PC-3 (cell line): ENCODE measurements at regions of chr20 and their contacts with region 1.

Region 1: DNA sequence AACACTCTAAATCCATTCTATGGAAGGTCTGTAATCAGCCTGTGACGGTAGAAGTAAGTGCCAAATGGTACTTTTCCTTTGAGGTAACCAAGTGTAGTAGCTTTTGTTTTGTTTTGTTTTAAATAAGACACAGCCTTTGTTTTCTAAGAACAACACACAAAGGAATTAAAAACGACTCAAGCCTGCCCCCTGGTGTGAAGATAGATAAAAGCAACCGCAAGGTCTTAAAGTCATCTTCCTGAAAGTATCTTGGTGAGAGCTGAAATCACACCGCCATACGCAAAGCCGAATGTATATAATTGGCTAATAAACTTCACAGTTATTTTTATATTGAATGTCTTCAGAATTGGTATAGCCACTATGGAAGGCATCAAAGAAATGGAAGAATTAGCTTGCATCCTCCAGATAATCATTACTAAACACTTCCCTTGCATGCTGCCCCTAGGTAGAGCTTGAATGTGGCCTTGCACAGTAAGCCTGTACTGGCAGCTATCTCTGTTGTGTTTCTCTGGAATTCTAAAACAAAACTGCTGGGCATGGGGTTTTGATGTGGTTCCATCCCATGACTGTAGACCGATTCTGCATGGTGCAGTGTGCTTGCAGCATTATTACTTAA is 95.6 kb downstream of the LAMP5 start:
- DNase-seq: peak; percentile 94
- ATAC-seq: peak; percentile 78
- H3K4me3 ChIP-seq: no peak overlapping the region
- H3K27ac ChIP-seq: no peak overlapping the region
- H3K4me1 ChIP-seq: peaks cover 7% of the 10 kb centered on the region
- H3K27me3 ChIP-seq: no peaks in the 10 kb centered on the region
- CTCF ChIP-seq: peak; percentile 93

Region 2: DNA sequence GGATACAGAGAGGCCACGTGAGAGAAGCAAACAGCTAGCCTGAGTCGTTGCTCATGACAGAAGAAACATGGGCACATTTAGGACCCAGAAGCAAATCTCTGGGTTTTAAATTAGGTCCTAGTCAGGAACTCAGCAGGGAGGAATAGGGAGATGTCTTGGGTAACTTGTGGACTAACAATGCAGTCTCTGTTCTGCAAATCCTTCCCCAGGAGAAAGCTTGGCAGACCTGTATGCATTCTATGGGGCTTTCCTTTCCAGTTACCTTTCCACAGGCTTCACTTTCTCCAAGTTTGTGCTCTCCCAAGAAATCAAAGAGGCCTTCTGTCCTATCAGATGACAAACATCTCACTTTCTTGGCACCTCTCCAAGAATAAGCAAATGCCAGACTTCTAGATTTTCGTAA is 588.3 kb before region 1 on chr20:
- CTCF ChIA-PET with region 1: no interaction called
- POLR2A ChIA-PET with region 1: no interaction called
- intact Hi-C with region 1: no loop called
- DNase-seq: peak; percentile 16
- ATAC-seq: no peak
- H3K4me3 ChIP-seq: no peak overlapping the region
- H3K27ac ChIP-seq: no peak overlapping the region
- H3K4me1 ChIP-seq: peaks cover 11% of the 10 kb centered on the region
- H3K27me3 ChIP-seq: no peaks in the 10 kb centered on the region
- CTCF ChIP-seq: no peak

Region 3: GRCh38 chr20:9407805-9408421 is 202.1 kb before region 1 on chr20:
- CTCF ChIA-PET with region 1: interaction called, 68 read pairs
- POLR2A ChIA-PET with region 1: no interaction called
- intact Hi-C with region 1: loop called (anchors 1 kb)
- DNase-seq: peak; percentile 92
- ATAC-seq: peak; percentile 82
- H3K4me3 ChIP-seq: no peak overlapping the region
- H3K27ac ChIP-seq: peak overlapping the region; percentile 73; the same call in 1 of the 2 replicates
- H3K4me1 ChIP-seq: peaks cover 25% of the 10 kb centered on the region
- H3K27me3 ChIP-seq: no peaks in the 10 kb centered on the region
- CTCF ChIP-seq: peak; percentile 95

Region 4: GRCh38 chr20:9467995-9468394 is 142.0 kb before region 1 on chr20:
- CTCF ChIA-PET with region 1: interaction called, 18 read pairs
- POLR2A ChIA-PET with region 1: no interaction called
- intact Hi-C with region 1: loop called (anchors 1 kb)
- DNase-seq: peak; percentile 25
- ATAC-seq: peak; percentile 60
- H3K4me3 ChIP-seq: no peak overlapping the region
- H3K27ac ChIP-seq: no peak overlapping the region
- H3K4me1 ChIP-seq: no peaks in the 10 kb centered on the region
- H3K27me3 ChIP-seq: no peaks in the 10 kb centered on the region
- CTCF ChIP-seq: peak; percentile 96

Region 5: GRCh38 chr20:9488063-9488462 is 121.9 kb before region 1 on chr20:
- CTCF ChIA-PET with region 1: no interaction called
- POLR2A ChIA-PET with region 1: no interaction called
- intact Hi-C with region 1: no loop called
- DNase-seq: peak; percentile 19
- ATAC-seq: 0 out of 2 replicates have a peak, but pooled peaks have one; percentile 7
- H3K4me3 ChIP-seq: no peak overlapping the region
- H3K27ac ChIP-seq: no peak overlapping the region
- H3K4me1 ChIP-seq: peaks cover 37% of the 10 kb centered on the region
- H3K27me3 ChIP-seq: no peaks in the 10 kb centered on the region
- CTCF ChIP-seq: no peak

Region 6: DNA sequence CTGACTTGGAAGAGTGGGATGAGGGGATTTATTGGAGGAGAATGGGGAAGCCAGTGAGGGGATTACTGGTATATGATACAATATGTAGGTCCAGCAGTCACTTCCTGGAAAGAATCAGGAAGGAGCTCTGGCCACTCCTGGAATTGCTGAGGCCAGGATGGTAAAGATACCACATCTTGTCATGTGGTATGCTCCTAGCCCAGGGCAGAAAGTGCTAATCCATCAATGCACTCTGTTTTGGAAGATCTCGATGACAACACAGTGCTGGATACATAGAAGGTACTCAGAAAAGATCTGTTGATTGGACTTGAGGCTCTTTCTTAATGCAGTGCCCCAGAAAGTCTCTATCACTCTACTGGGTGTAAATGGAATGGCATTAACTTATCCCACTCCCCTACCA is 43.0 kb before region 1 on chr20:
- CTCF ChIA-PET with region 1: interaction called, 18 read pairs
- POLR2A ChIA-PET with region 1: no interaction called
- intact Hi-C with region 1: no loop called
- DNase-seq: no peak
- ATAC-seq: no peak
- H3K4me3 ChIP-seq: no peak overlapping the region
- H3K27ac ChIP-seq: no peak overlapping the region
- H3K4me1 ChIP-seq: no peaks in the 10 kb centered on the region
- H3K27me3 ChIP-seq: no peaks in the 10 kb centered on the region
- CTCF ChIP-seq: no peak

Region 7: GRCh38 chr20:9581509-9581908 is 28.5 kb before region 1 on chr20:
- CTCF ChIA-PET with region 1: no interaction called
- POLR2A ChIA-PET with region 1: no interaction called
- intact Hi-C with region 1: no loop called
- DNase-seq: no peak
- ATAC-seq: no peak
- H3K4me3 ChIP-seq: no peak overlapping the region
- H3K27ac ChIP-seq: no peak overlapping the region
- H3K4me1 ChIP-seq: no peaks in the 10 kb centered on the region
- H3K27me3 ChIP-seq: no peaks in the 10 kb centered on the region
- CTCF ChIP-seq: no peak

Region 8: DNA sequence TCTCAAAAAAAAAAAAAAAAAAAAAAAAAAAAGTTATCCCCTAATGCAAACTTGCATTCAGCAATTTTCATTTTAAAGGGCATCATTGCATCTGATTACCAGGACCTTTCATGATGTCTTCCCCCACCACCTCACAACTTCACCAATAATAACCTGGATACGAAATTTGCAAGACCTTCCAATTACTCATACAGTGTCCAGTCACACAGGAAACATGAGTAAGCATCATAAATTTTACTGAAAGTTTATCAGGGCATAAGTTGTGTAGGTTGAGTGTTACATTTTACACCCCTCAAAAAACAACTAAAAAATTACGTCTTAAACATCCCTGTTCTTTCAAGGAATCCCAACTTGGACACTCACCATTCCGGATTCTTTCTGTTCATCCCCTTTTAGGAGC is 345.7 kb after region 1 on chr20:
- CTCF ChIA-PET with region 1: interaction called, 10 read pairs
- POLR2A ChIA-PET with region 1: no interaction called
- intact Hi-C with region 1: no loop called
- DNase-seq: peak; percentile 82
- ATAC-seq: peak; percentile 96
- H3K4me3 ChIP-seq: no peak overlapping the region
- H3K27ac ChIP-seq: peak overlapping the region; percentile 47
- H3K4me1 ChIP-seq: peaks cover 10% of the 10 kb centered on the region
- H3K27me3 ChIP-seq: no peaks in the 10 kb centered on the region
- CTCF ChIP-seq: no peak

Region 9: GRCh38 chr20:10090588-10091166 is 480.7 kb after region 1 on chr20:
- CTCF ChIA-PET with region 1: no interaction called
- POLR2A ChIA-PET with region 1: no interaction called
- intact Hi-C with region 1: no loop called
- DNase-seq: peak; percentile 81
- ATAC-seq: peak; percentile 84
- H3K4me3 ChIP-seq: no peak overlapping the region
- H3K27ac ChIP-seq: no peak overlapping the region
- H3K4me1 ChIP-seq: peaks cover 19% of the 10 kb centered on the region
- H3K27me3 ChIP-seq: peaks cover 2% of the 10 kb centered on the region; the same call in 1 of the 2 replicates
- CTCF ChIP-seq: peak; percentile 93